Testis (tissue), 5 donors: ENCODE measurements at regions of chr10 and their contacts with region 1.

Region 1: DNA sequence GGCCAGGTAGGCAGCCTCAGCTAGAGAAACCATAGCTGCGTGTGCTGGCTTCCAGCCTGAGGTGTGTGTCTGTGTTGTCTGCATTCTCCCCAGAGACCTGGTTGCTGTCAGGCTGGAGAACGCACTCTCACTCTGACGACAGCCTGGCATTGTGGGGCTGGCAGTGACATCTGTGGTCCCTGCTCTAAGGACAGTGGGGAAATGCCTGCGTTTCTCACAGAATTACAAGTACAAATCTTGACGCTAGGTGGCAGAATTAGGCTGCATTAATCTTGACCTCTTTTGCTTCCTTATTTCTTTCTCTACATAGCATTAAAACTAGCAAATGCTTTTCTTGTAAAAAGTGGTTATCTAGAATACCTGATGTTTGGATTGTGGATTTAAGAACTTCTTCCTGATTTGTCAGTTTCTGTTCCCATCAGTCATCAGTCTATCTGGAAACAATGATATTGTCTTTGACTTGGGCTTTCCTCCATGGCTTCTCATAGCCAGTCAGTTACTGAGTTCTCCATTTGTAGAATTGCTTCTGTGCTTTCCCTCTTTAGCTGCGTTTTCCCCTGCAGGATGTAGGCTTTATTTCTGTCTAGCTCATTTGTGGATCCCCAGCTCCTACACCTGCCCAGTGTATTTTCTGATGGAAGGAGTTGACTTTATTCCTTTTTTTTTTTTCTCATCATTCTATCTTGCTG is 86.0 kb downstream of the FANK1 start:
- DNase-seq: peak; percentile 47
- H3K4me3 ChIP-seq: no peak overlapping the region
- H3K27ac ChIP-seq: no peak overlapping the region
- H3K4me1 ChIP-seq: no peaks in the 10 kb centered on the region
- H3K27me3 ChIP-seq: no peaks in the 10 kb centered on the region
- CTCF ChIP-seq: peak; percentile 50 to 62 (median 53)
- POLR2A ChIP-seq: no peak

Region 2: GRCh38 chr10:125048101-125048864 is 934.1 kb before region 1 on chr10:
- intact Hi-C with region 1: no loop called
- DNase-seq: peak; percentile 92
- H3K4me3 ChIP-seq: no peak overlapping the region
- H3K27ac ChIP-seq: peak overlapping the region; percentile 65 to 70
- H3K4me1 ChIP-seq: peaks cover 50% of the 10 kb centered on the region
- H3K27me3 ChIP-seq: no peaks in the 10 kb centered on the region
- CTCF ChIP-seq: peak; percentile 87 to 94 (median 87)
- POLR2A ChIP-seq: no peak

Region 3: GRCh38 chr10:125936331-125936730 is 46.1 kb before region 1 on chr10:
- intact Hi-C with region 1: no loop called
- DNase-seq: no peak
- H3K4me3 ChIP-seq: no peak overlapping the region
- H3K27ac ChIP-seq: no peak overlapping the region
- H3K4me1 ChIP-seq: no peaks in the 10 kb centered on the region
- H3K27me3 ChIP-seq: no peaks in the 10 kb centered on the region
- CTCF ChIP-seq: no peak
- POLR2A ChIP-seq: no peak

Region 4: DNA sequence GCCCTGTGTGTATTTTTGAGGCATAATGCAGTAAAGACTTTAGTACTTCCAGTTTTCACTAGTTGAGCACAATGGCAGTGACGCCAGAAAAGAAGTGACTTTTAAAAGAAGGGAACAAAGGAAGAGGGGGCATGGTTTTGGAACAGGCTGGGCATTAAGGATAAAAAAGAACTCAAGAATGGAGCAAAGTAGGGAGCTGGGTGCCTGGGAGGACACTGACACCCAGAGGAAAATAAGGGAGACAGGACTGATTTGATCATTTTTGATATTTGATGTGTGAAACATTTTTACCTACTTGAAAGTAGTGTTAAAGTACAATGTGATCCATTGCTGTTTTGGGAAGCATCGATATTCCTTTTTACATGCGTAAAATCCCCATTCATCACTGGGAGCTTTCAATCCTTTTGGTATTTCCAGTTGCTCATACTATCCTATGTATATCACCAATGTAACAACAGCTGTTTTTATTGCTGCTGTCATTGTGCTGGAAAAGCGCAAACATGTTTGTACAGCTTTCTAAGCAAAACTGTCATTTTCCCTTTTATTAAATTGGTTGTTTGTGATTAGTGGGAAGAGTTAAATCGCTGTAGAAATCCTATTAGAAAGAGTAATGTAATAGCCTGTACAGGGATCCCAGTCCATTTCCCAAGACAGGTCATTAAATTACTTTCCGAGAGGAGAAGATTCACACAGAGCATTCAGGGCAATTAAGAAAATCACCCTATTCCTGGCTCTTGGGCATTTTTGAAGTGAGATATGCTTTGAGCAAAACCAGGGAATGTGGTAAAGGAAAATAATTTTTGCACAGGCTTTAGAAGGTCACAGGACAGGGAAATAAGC is 320.6 kb after region 1 on chr10:
- intact Hi-C with region 1: loop called (anchors 10 kb)
- DNase-seq: no peak
- H3K4me3 ChIP-seq: no peak overlapping the region
- H3K27ac ChIP-seq: no peak overlapping the region
- H3K4me1 ChIP-seq: no peaks in the 10 kb centered on the region
- H3K27me3 ChIP-seq: no peaks in the 10 kb centered on the region
- CTCF ChIP-seq: no peak
- POLR2A ChIP-seq: no peak

Region 5: GRCh38 chr10:126504063-126504739 is 521.8 kb after region 1 on chr10:
- intact Hi-C with region 1: loop called (anchors 10 kb)
- DNase-seq: peak; percentile 55
- H3K4me3 ChIP-seq: no peak overlapping the region
- H3K27ac ChIP-seq: no peak overlapping the region
- H3K4me1 ChIP-seq: no peaks in the 10 kb centered on the region
- H3K27me3 ChIP-seq: no peaks in the 10 kb centered on the region
- CTCF ChIP-seq: peak in 2 of 3 experiments; percentile 58 to 70
- POLR2A ChIP-seq: no peak